OCI-LY7 (cell line): ENCODE measurements at regions of chr15 and their contacts with region 1.

Region 1: DNA sequence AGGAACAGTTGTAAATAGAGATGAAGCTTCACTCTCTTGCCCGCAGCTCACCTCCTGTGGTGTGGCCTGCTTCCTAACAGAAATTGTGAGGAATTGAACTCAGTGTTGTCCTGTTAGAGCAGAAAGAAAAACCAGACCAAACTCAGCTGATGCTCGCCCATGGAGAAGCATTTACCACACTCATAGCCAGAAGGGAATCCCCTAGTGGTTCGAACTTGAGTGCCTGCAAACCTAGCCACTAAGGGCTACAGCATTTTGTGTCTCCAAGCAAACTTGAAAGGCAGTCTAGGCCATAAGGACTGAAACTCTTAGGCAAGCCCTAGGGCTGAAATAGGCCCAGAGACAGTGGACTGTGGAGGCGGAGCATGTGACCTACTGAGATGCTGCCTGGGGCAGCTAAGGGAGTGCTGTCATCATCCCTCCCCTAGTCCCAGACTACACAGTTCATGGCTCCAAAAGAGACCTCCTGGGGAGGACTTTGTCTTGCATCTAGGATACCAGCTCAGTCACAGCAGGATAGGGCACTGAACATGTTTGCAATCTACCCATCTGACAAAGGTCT is 44.5 kb upstream of the MCTP2 start:
- DNase-seq: no peak
- H3K4me3 ChIP-seq: no peak overlapping the region
- H3K27ac ChIP-seq: no peak overlapping the region
- H3K4me1 ChIP-seq: no peaks in the 10 kb centered on the region
- CTCF ChIP-seq: no peak

Region 2: DNA sequence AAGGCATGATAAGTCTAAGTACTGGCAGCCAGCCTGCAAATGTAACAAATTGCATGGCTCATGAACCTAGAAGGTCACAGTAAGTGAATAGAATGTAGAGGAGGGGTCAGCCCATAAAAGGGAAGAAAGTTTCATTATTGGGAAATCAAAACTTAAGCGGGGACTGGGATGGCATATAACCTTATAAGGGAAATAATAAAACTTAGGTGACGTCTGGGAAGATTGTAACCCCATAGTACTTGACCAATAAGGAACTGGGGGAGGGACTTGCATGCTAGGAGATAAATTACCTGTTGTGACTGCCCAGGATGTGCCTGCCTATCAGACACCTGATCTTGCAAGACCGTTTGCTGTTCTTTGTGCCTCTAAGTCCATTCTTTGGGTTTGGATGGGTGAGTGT is 16.5 kb after region 1 on chr15:
- CTCF ChIA-PET with region 1: no interaction called
- POLR2A ChIA-PET with region 1: no interaction called
- intact Hi-C with region 1: loop called (anchors 2 kb)
- DNase-seq: no peak
- H3K4me3 ChIP-seq: no peak overlapping the region
- H3K27ac ChIP-seq: no peak overlapping the region
- H3K4me1 ChIP-seq: no peaks in the 10 kb centered on the region
- CTCF ChIP-seq: no peak